Heart right ventricle (tissue), 16 donors: ENCODE measurements at regions of chr12 and their contacts with region 1.

Region 1: GRCh38 chr12:14167005-14167628 is 185.7 kb upstream of the GRIN2B start:
- DNase-seq: peak in 1 of 2 donors; percentile 32
- ATAC-seq: no peak
- H3K4me3 ChIP-seq: no peak overlapping the region
- H3K27ac ChIP-seq: no peak overlapping the region
- H3K4me1 ChIP-seq: no peaks in the 10 kb centered on the region
- H3K27me3 ChIP-seq: peaks cover 0 to 5% (median 0%) of the 10 kb centered on the region in 7 donors
- CTCF ChIP-seq: peak; percentile 86 to 96 (median 94)

Region 2: GRCh38 chr12:13255792-13256691 is 911.1 kb before region 1 on chr12:
- intact Hi-C with region 1: loop called in 2 of 10 experiments (anchors 10 kb)
- DNase-seq: peak; percentile 94 to 95
- ATAC-seq: peak; percentile 98 to 99 (median 99)
- H3K4me3 ChIP-seq: peak overlapping the region in 8 of 10 donors; percentile 8 to 49 (median 42)
- H3K27ac ChIP-seq: peak overlapping the region in 1 of 10 donors; percentile 24
- H3K4me1 ChIP-seq: peaks cover 0 to 29% (median 13%) of the 10 kb centered on the region in 9 donors
- H3K27me3 ChIP-seq: peaks cover 0 to 2% (median 0%) of the 10 kb centered on the region in 7 donors
- CTCF ChIP-seq: peak; percentile 87 to 99 (median 98)

Region 3: DNA sequence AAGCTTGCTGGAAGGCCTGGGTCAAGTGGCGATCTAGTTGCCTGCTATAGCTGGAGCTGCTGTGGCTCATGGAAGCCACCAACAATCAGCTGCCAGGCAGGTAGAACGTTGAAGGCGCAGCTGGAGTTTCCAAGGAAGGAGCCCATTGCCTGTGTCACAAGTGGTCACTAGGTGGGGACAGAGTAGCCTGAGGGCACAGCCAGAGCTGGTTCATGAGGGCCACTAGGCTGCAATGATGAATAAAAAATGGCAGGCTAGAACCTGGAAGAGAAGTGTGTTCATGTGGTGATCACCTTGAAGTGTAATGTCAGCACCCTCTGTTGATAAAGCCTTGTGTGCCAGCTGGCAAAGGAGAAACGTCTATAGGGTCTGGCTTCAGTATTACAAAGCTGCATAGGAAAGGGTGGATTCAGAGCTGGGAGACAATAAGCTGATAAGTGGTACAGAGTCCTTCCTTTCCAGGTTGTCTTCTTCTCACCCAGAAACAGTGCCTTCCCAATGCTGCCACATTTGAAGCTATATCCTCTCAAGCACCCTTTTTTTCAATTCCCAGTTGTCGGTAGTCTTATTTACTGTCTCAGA is 804.8 kb before region 1 on chr12:
- intact Hi-C with region 1: loop called in 1 of 10 experiments (anchors 10 kb)
- DNase-seq: peak; percentile 34
- ATAC-seq: peak in 6 of 8 donors; percentile 38 to 84 (median 68)
- H3K4me3 ChIP-seq: no peak overlapping the region
- H3K27ac ChIP-seq: no peak overlapping the region
- H3K4me1 ChIP-seq: no peaks in the 10 kb centered on the region
- H3K27me3 ChIP-seq: peaks cover 0 to 37% (median 24%) of the 10 kb centered on the region in 7 donors
- CTCF ChIP-seq: peak; percentile 54 to 80 (median 77)

Region 4: DNA sequence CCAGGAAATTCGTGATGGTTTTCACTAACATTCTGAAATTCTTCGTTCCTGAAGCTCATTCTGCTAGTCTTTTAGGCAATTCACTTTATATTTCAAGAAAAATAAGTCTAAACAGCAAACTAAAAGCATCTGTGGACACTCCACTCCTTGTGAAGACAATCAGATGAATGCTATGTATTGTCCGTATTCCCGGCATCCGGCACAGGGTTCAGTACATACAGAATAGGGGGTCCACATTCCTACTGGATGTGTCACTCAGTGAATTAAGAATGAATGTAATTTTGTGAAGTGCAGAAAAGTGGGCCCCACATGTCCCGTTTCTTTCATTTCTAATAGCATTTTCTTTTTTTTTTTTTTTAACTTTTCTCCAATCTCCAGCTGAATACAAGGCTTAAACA is 427.0 kb before region 1 on chr12:
- intact Hi-C with region 1: loop called in 8 of 10 experiments (anchors 2 to 10 kb)
- DNase-seq: no peak
- ATAC-seq: no peak
- H3K4me3 ChIP-seq: no peak overlapping the region
- H3K27ac ChIP-seq: no peak overlapping the region
- H3K4me1 ChIP-seq: no peaks in the 10 kb centered on the region
- H3K27me3 ChIP-seq: peaks cover 0 to 28% (median 16%) of the 10 kb centered on the region in 7 donors
- CTCF ChIP-seq: no peak

Region 5: DNA sequence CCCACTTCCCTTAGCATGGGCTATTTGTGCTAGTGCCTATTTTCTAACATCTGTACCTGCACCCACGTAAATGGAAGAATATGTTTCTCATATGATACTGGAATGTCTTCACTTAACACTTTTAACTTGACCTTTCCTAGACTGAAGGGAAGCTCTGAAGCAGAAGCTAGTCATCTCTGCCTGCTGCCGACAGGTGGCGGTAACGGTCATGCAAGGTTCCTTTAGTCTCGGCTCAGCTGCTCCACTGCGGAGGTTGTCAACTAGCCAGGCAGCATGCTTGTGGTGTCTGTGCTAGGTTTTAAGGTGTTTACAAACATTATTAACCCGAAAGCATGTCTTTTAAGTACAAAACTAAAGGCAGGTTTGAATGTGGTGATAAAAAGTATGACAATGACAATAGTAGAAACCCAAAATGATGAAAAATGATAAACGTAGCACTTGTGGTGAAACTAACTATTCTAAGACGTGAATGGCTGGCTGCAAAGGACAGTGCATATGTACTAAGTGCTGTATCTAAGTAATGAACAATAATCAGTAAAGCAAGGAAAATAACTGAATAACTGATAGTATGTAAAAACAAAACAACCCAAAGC is 302.9 kb before region 1 on chr12:
- intact Hi-C with region 1: loop called (anchors 1 to 10 kb)
- DNase-seq: peak; percentile 66 to 73
- ATAC-seq: peak in 5 of 8 donors; percentile 49 to 75 (median 57)
- H3K4me3 ChIP-seq: no peak overlapping the region
- H3K27ac ChIP-seq: no peak overlapping the region
- H3K4me1 ChIP-seq: no peaks in the 10 kb centered on the region
- H3K27me3 ChIP-seq: peaks cover 0 to 62% (median 25%) of the 10 kb centered on the region in 7 donors
- CTCF ChIP-seq: peak; percentile 53 to 93 (median 90)